ENCODE measurements at regions of chr22 and their contacts with region 1.

Region 1: GRCh38 chr22:32378707-32379272 is 21.1 kb downstream of the RFPL3 start:
- DNase-seq: no peak
- ATAC-seq: peak in 3 of 4 donors; percentile 48 to 61 (median 60)
- H3K4me3 ChIP-seq: no peak overlapping the region
- H3K27ac ChIP-seq: no peak overlapping the region
- H3K4me1 ChIP-seq: no peaks in the 10 kb centered on the region
- H3K27me3 ChIP-seq: no peaks in the 10 kb centered on the region
- CTCF ChIP-seq: peak in 11 of 12 donors; percentile 19 to 63 (median 39)
- POLR2A ChIP-seq: no peak

Region 2: DNA sequence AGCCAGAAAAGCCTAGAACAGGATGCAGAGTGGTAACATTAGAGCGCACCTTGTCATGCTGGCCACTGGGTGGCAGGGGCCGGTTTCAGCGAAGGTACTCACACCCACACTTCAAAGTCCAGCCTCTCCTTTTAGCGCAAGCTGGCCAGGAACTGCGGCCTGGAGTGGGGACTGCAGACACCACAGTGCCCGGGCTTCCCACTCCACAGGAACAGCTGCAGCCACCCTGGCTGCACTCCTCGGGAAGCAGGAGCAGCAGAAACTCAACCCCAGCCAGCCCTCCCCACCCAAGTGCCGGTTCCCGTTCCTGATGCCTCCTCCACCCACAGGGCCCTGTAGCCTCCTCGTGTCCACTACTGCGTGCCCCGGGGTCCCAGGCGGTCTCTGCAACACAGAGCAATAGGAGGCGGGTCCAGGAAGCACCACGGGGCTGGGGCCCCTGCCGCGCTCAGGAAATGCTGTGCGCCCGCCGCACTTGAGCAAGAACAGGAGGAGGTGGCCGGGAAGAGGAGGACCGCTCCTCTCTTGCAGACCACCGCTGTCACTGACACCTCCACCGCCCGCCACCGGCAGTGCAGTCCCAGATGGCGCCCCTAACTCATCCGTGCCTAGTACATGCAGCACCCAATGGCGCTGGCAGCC is 176.1 kb before region 1 on chr22:
- intact Hi-C with region 1: loop called in 1 of 10 experiments (anchors 5 kb)
- DNase-seq: peak in 3 of 5 donors; percentile 33 to 57 (median 53)
- ATAC-seq: peak; percentile 63 to 77 (median 73)
- H3K4me3 ChIP-seq: peak overlapping the region in 10 of 12 donors; percentile 0 to 43 (median 27)
- H3K27ac ChIP-seq: no peak overlapping the region
- H3K4me1 ChIP-seq: peaks cover 0 to 22% (median 0%) of the 10 kb centered on the region in 12 donors
- H3K27me3 ChIP-seq: peaks cover 0 to 31% (median 13%) of the 10 kb centered on the region in 9 donors
- CTCF ChIP-seq: peak in 11 of 12 donors; percentile 23 to 56 (median 44)
- POLR2A ChIP-seq: no peak